Activated B cell treated with CpG ODN at 0.5 μM for 24 hours (primary cell): ENCODE measurements at regions of chr20 and their contacts with region 1.

Region 1: DNA sequence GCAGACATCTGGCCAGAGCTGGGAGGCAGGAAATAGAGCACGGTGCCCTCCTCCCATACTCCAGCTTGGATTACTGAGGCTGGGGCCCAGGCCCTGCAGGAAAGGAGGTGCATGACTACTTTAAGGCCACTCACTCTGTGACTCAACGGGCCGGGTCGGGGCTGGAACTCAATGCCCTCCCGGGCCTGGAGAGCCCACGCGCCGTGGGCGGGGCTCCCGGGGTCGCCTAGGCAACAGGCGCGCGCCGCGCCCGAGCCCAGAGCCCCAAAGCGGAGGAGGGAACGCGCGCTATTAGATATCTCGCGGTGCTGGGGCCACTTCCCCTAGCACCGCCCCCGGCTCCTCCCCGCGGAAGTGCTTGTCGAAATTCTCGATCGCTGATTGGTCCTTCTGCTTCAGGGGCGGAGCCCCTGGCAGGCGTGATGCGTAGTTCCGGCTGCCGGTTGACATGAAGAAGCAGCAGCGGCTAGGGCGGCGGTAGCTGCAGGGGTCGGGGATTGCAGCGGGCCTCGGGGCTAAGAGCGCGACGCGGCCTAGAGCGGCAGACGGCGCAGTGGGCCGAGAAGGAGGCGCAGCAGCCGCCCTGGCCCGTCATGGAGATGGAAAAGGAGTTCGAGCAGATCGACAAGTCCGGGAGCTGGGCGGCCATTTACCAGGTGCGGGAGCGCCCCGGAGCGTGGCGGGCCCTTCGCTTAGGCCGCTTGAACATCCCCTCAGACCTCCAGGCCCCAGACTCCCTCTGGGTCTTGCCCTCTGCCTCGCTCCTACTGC is at the start of gene PTPN1:
- DNase-seq: peak; percentile 97
- ATAC-seq: peak; percentile 90
- H3K4me3 Mint-ChIP-seq: peak within 1 kb of the TSS; percentile 90
- H3K27ac Mint-ChIP-seq: peak within 1 kb of the TSS; percentile 96
- H3K4me1 Mint-ChIP-seq: peaks cover 48% of the 10 kb centered on the region
- H3K27me3 Mint-ChIP-seq: no peaks in the 10 kb centered on the region
- CTCF ChIP-seq: no peak
- total RNA-seq, gene PTPN1: 212 and 227 TPM in 2 replicates

Region 2: DNA sequence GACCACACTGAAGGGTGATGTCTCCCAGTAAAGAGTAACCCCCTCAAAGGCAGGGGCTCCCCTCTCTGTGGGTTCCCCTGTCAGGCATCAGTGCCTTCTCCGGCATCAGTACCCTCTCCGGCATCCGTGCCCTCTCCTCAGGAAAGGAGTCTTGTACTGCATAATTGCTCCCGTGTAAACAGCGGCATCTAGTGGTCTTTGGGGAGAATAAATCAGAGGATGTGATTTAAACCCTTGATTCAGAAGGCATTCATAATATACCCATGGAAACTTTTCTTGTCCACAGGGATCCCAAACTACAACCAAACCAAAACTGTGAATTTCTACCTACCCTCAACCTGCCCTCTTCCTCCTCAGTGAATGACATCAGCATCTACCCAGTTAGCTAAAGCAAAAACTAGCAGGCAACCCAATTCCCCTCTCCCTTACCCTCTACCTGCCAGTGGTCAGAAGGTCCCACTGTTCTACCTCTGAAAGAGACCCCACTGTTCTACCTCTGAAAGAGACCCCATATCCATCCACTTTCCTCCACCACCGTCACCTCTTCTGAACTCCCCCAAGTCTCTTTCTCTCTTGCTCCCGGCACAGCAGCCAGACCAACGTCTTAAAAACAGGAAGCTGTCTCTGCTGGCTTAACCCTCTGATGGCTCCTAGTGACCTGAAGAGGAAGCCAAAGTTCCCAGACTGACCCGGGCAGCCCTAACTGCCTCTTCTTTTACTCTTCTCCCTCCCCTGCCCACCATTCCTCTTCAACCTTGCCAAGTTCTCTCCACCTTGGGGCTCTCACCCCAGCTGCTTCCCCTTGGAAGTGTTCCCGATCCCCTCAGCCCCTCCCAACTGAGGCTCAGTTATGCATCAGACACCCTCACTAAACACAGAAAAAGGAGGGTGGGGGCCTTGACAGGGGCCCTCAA is 424.4 kb before region 1 on chr20:
- CTCF ChIA-PET with region 1: no interaction called
- POLR2A ChIA-PET with region 1: no interaction called
- intact Hi-C with region 1: no loop called
- DNase-seq: no peak
- ATAC-seq: peak; percentile 82
- H3K4me3 Mint-ChIP-seq: peak overlapping the region; percentile 83
- H3K27ac Mint-ChIP-seq: peak overlapping the region; percentile 55
- H3K4me1 Mint-ChIP-seq: peaks cover 14% of the 10 kb centered on the region
- H3K27me3 Mint-ChIP-seq: no peaks in the 10 kb centered on the region
- CTCF ChIP-seq: no peak

Region 3: GRCh38 chr20:50478162-50479036 is 31.7 kb before region 1 on chr20:
- CTCF ChIA-PET with region 1: interaction called, 10 read pairs
- POLR2A ChIA-PET with region 1: interaction called, 20 read pairs
- intact Hi-C with region 1: loop called (anchors 1 kb)
- DNase-seq: peak; percentile 53
- ATAC-seq: peak; percentile 99
- H3K4me3 Mint-ChIP-seq: peak overlapping the region; percentile 1
- H3K27ac Mint-ChIP-seq: no peak overlapping the region
- H3K4me1 Mint-ChIP-seq: peaks cover 43% of the 10 kb centered on the region
- H3K27me3 Mint-ChIP-seq: no peaks in the 10 kb centered on the region
- CTCF ChIP-seq: peak; percentile 24

Region 4: DNA sequence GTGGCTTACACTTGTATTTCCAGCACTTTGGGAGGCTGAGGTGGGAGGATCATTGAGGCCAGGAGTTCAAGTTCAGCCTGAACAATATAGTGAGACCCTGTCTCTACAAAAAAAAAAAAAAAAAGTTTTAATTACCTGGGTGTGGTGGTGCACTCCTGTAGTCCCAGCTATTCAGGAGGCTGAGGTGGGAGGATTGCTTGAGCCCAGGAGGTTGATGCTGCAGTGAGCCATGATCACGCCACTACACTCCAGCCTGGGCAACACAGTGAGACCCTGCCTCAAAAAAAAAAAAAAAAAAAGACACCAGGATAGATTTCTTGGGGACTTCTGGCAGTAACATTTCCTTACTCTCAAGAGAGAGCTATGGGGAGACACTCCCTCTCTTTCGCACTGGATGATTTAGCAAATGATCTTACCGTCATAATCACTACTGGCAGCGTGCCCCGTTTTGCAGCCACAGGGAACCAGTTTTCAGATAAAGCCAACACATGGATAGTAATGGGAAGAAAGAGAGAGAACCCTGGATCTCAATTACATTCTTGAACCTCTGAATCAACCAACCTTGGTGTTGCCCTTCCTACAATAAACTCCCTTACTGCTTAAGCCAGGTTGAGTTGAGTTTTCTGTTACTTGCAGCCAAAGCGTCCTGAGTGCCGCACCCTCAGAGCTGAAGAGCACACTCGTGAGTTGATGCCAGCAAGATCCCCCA is 18.0 kb before region 1 on chr20:
- CTCF ChIA-PET with region 1: interaction called, 5 read pairs
- POLR2A ChIA-PET with region 1: interaction called, 64 read pairs
- intact Hi-C with region 1: no loop called
- DNase-seq: no peak
- ATAC-seq: no peak
- H3K4me3 Mint-ChIP-seq: no peak overlapping the region
- H3K27ac Mint-ChIP-seq: no peak overlapping the region
- H3K4me1 Mint-ChIP-seq: peaks cover 43% of the 10 kb centered on the region
- H3K27me3 Mint-ChIP-seq: no peaks in the 10 kb centered on the region
- CTCF ChIP-seq: no peak

Region 5: DNA sequence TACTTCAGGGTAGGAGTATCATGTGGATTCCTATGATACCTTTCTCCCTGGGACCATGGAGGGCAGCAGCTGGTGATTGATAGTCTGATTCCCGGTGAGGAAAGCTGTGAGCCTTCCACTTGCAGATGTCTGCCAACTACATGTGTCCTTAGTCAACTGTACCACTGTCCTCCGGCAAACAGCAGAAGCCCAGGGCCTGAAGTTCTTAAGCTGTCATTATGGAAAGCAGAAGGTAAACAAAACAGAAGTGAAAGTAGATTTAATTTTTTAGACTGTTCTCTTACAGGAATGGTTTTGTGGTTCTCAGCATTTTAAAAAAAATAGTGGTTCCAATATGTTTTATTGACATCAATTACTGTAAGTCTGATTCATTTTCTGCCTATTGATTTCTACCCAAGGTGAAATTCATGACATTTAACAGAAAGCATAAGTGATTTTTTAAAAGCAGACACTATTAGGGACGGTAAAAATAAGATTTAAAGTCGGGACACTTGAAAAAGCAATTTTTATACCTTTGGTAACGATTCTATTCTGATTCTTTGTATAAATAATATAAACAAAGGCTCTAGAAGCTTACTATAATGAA is 36.7 kb after region 1 on chr20:
- CTCF ChIA-PET with region 1: interaction called, 8 read pairs
- POLR2A ChIA-PET with region 1: interaction called, 1,679 read pairs
- intact Hi-C with region 1: loop called (anchors 1 kb)
- DNase-seq: no peak
- ATAC-seq: peak; percentile 78
- H3K4me3 Mint-ChIP-seq: peak overlapping the region; percentile 79
- H3K27ac Mint-ChIP-seq: peak overlapping the region; percentile 85
- H3K4me1 Mint-ChIP-seq: peaks cover 75% of the 10 kb centered on the region
- H3K27me3 Mint-ChIP-seq: no peaks in the 10 kb centered on the region
- CTCF ChIP-seq: no peak

Region 6: DNA sequence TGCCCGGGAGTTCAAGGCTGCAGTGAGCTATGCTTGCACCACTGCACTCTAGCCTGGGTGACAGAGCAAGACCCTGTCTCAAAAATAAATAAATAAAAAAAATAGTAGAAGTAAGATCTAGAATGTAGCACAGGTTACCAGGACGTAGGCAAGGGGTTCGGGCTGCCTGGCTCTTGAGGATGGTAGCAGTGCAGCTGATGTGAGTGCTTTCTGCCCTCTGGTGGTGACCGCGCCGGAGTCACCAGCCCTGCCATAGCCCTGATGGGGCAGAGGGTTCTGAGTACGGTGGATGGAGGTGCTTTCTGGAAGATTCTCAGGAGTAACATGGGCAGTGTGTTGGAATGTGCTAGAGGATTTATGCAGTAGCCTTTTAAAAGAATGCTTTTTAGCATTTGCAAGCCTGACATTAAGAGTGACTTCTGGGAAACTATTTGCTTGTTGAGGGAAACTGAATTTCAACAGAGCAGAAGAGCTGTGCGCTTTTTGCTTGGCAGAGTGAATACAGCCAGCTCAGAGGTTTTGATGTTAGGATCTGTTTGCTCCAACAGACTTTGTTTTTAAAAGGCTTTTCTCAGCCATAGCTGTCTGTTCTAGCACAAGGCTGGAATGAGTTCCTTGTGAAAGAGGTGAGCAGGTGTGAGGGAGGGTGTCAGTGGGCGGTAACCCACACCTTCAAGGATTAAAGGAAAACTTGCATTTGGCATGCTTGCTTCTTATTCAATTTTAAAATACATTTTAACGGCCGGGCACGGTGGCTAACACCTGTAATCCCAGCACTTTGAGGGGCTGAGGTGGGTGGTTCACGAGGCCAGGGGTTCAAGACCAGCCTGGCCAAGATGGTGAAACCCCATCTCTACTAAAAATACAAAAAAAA is 66.0 kb after region 1 on chr20:
- CTCF ChIA-PET with region 1: interaction called, 154 read pairs
- POLR2A ChIA-PET with region 1: interaction called, 1,679 read pairs
- intact Hi-C with region 1: no loop called
- DNase-seq: peak; percentile 52
- ATAC-seq: peak; percentile 84
- H3K4me3 Mint-ChIP-seq: no peak overlapping the region
- H3K27ac Mint-ChIP-seq: peak overlapping the region; percentile 77
- H3K4me1 Mint-ChIP-seq: peaks cover 55% of the 10 kb centered on the region
- H3K27me3 Mint-ChIP-seq: no peaks in the 10 kb centered on the region
- CTCF ChIP-seq: peak; percentile 48

Region 7: GRCh38 chr20:50731055-50731871 is 221.1 kb after region 1 on chr20 and contains the start of gene PARD6B:
- CTCF ChIA-PET with region 1: no interaction called
- POLR2A ChIA-PET with region 1: no interaction called
- intact Hi-C with region 1: loop called (anchors 1 kb)
- DNase-seq: peak; percentile 98
- ATAC-seq: peak; percentile 94
- H3K4me3 Mint-ChIP-seq: peak within 1 kb of the TSS; percentile 89
- H3K27ac Mint-ChIP-seq: peak within 1 kb of the TSS; percentile 71
- H3K4me1 Mint-ChIP-seq: peaks cover 16% of the 10 kb centered on the region
- H3K27me3 Mint-ChIP-seq: peaks cover 2% of the 10 kb centered on the region
- CTCF ChIP-seq: no peak
- total RNA-seq, gene PARD6B: 3.8 and 5.7 TPM in 2 replicates

Region 8: GRCh38 chr20:50929299-50930138 is 419.4 kb after region 1 on chr20:
- CTCF ChIA-PET with region 1: no interaction called
- POLR2A ChIA-PET with region 1: interaction called, 5 read pairs
- intact Hi-C with region 1: loop called (anchors 1 kb)
- DNase-seq: peak; percentile 74
- ATAC-seq: peak; percentile 66
- H3K4me3 Mint-ChIP-seq: peak overlapping the region; percentile 85
- H3K27ac Mint-ChIP-seq: peak overlapping the region; percentile 92
- H3K4me1 Mint-ChIP-seq: peaks cover 52% of the 10 kb centered on the region
- H3K27me3 Mint-ChIP-seq: no peaks in the 10 kb centered on the region
- CTCF ChIP-seq: no peak